Heart left ventricle (tissue), 16 donors: ENCODE measurements at regions of chr1 and their contacts with region 1.

Region 1: GRCh38 chr1:111990878-111991718 is 1.6 kb upstream of the KCND3 start:
- DNase-seq: peak; percentile 70 to 85 (median 77)
- ATAC-seq: peak; percentile 64 to 74 (median 74)
- H3K4me3 ChIP-seq: peak overlapping the region; percentile 49 to 82 (median 64)
- H3K27ac ChIP-seq: peak overlapping the region; percentile 47 to 91 (median 80)
- H3K4me1 ChIP-seq: peaks cover 0 to 53% (median 23%) of the 10 kb centered on the region in 12 donors
- H3K27me3 ChIP-seq: peaks cover 0 to 46% (median 3%) of the 10 kb centered on the region in 9 donors
- CTCF ChIP-seq: peak in 9 of 12 donors; percentile 33 to 61 (median 42)
- POLR2A ChIP-seq: no peak

Region 2: GRCh38 chr1:111801071-111801841 is 189.8 kb before region 1 on chr1:
- intact Hi-C with region 1: loop called in 8 of 10 experiments (anchors 1 to 10 kb)
- DNase-seq: peak in 4 of 5 donors; percentile 57 to 85 (median 70)
- ATAC-seq: peak; percentile 88 to 93 (median 90)
- H3K4me3 ChIP-seq: no peak overlapping the region
- H3K27ac ChIP-seq: peak overlapping the region in 10 of 12 donors; percentile 20 to 86 (median 64)
- H3K4me1 ChIP-seq: peaks cover 0 to 31% (median 8%) of the 10 kb centered on the region in 12 donors
- H3K27me3 ChIP-seq: no peaks in the 10 kb centered on the region
- CTCF ChIP-seq: peak in 4 of 12 donors; percentile 8 to 32 (median 12)
- POLR2A ChIP-seq: no peak

Region 3: DNA sequence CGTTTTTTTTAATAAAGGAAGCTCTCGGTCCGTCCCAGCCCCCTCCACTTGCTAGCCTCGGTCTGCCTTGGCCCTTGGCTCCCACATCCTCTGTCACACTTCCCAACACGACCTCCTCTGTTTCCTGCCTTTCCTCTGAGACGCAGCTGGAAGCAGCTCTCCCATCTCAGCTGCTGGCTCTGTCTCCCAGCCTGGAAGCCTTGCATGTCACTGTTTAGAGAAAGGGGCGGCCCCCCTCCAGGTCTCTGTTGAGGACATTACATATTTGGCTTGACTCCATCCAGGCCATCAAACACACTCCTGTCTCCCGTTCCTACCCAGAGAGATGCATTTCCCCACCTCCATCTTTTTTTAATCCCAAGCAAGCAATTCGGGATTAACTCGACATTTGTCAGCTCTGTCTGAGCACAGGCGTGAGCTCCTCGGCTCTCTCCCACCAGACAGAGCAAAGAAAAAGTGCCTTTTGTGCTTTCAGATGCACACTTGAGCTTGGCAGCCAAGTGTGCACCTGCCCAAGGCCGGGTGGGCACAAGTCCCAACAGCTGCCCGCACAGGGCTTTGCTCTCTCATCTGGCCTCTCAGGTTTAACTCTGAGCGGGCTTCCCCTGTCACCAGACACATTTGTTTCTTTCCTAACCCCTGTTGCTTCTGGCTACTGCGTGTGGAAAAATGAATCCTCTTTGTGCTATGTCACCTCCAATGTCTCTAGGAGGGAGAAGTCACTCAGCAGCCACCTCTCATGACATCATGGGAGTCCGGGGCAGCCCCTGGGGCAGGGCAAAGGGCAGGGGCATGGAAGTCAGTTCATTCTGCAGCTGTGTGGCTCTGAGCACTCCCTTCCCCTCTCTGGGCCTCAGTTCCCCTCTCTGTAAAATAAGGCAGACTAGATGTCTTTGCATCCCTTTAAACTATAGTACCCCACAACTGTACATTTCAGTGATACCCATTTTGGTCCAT is 109.9 kb before region 1 on chr1:
- intact Hi-C with region 1: loop called in 6 of 10 experiments (anchors 2 to 10 kb)
- DNase-seq: peak in 3 of 5 donors; percentile 36 to 72 (median 44)
- ATAC-seq: peak; percentile 27 to 73 (median 52)
- H3K4me3 ChIP-seq: no peak overlapping the region
- H3K27ac ChIP-seq: peak overlapping the region in 4 of 12 donors; percentile 12 to 53 (median 36)
- H3K4me1 ChIP-seq: peaks cover 0 to 60% (median 28%) of the 10 kb centered on the region in 12 donors
- H3K27me3 ChIP-seq: no peaks in the 10 kb centered on the region
- CTCF ChIP-seq: no peak
- POLR2A ChIP-seq: no peak

Region 4: DNA sequence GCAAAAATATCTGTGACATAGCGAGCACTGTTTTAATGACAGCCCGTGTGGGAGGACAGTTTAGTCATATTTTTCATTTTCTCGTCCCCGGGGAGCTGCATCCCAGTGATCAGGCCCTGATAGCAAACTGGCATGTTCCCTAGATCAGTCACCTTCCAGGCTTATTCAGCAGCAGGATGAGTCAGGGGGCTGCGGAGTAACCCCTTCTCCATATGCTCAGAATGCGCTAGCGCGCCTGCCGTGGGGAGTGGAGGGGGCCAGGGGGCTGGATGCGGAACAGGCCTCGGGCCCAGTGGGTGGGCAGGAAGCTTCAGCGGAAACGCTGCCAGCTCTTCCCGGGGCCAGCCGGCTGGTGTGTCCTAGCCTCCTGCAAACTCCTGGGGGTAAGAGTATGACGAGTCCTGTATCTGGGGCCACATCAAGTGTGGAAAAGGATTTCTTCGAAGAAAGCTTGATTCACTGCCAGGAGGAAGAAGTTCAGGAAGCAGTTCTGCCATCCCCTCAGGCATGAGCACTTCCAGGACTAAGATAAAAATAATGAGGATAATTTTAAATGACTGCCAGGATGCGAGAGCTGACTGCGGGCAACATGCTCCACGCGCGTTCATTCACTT is 95.5 kb before region 1 on chr1:
- intact Hi-C with region 1: no loop called
- DNase-seq: no peak
- ATAC-seq: peak in 1 of 4 donors; percentile 5
- H3K4me3 ChIP-seq: no peak overlapping the region
- H3K27ac ChIP-seq: no peak overlapping the region
- H3K4me1 ChIP-seq: no peaks in the 10 kb centered on the region
- H3K27me3 ChIP-seq: no peaks in the 10 kb centered on the region
- CTCF ChIP-seq: no peak
- POLR2A ChIP-seq: no peak

Region 5: DNA sequence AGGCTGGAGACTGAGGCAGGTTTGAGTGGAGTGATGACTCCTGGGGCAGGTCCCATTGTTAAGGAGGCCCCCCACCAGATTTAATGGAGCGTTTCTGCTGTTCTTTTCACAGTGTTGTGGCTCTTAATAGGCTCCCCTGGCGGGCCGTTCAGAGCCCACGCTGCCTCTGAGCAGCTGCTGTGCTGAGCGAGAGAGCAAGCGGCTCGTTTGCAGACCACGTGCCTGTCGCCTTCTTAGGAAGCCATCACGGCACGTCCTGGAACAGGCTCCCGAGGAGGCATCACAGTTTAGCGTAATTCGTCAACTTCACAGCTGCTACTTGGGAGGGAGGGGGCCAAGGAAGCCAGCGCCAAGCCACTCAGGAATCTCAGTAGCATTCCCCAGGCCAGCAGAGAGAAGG is 334.4 kb after region 1 on chr1:
- intact Hi-C with region 1: loop called in 2 of 10 experiments (anchors 5 to 10 kb)
- DNase-seq: peak in 3 of 5 donors; percentile 24 to 45 (median 34)
- ATAC-seq: peak in 3 of 4 donors; percentile 59 to 75 (median 71)
- H3K4me3 ChIP-seq: no peak overlapping the region
- H3K27ac ChIP-seq: no peak overlapping the region
- H3K4me1 ChIP-seq: peaks cover 0 to 16% (median 0%) of the 10 kb centered on the region in 12 donors
- H3K27me3 ChIP-seq: no peaks in the 10 kb centered on the region
- CTCF ChIP-seq: no peak
- POLR2A ChIP-seq: no peak